AG04449 (cell line): ENCODE measurements at regions of chr11 and their contacts with region 1.

Region 1: DNA sequence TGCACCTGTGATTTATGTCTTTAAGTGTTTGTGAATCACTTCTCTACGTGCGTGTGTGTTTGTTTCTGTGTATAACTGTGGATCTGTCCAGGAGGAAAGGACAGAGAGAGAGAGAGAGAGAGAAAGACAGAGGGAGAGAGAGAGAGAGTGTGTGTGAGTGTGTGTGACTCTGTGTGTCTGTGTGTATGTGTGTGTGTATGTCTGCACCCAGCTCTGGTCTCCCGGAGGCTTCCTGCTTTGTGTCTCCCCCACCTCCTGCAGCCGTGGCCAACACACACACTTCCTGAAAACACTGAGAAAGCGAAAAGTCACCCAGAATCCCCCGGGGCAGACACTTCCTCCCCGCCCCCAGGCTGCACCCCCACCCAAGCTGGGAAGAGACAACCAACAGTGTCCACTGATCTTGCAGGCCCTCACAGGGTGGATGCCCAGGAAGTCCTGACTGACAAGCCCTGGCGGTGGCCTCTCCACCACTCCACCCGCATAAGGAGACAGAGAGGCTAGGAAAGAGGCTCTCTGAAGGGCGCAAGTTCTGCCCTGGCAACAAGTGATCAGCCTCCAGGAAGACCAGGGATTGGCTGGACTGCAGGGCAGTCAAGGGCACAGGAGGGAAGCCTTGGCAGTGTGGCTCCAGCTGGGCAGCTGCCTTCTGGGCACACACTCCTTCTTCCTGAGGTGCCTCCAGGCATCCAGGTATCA is 30.0 kb downstream of the ARAP1 start:
- DNase-seq: peak; percentile 84
- H3K4me3 ChIP-seq: peak overlapping the region; percentile 77
- CTCF ChIP-seq: no peak

Region 2: GRCh38 chr11:72703267-72704008 is 18.8 kb before region 1 on chr11:
- CTCF ChIA-PET with region 1: interaction called, 14 read pairs
- POLR2A ChIA-PET with region 1: interaction called, 3 read pairs
- DNase-seq: peak; percentile 50
- H3K4me3 ChIP-seq: peak overlapping the region; percentile 13; the same call in 1 of the 2 replicates
- CTCF ChIP-seq: no peak

Region 3: DNA sequence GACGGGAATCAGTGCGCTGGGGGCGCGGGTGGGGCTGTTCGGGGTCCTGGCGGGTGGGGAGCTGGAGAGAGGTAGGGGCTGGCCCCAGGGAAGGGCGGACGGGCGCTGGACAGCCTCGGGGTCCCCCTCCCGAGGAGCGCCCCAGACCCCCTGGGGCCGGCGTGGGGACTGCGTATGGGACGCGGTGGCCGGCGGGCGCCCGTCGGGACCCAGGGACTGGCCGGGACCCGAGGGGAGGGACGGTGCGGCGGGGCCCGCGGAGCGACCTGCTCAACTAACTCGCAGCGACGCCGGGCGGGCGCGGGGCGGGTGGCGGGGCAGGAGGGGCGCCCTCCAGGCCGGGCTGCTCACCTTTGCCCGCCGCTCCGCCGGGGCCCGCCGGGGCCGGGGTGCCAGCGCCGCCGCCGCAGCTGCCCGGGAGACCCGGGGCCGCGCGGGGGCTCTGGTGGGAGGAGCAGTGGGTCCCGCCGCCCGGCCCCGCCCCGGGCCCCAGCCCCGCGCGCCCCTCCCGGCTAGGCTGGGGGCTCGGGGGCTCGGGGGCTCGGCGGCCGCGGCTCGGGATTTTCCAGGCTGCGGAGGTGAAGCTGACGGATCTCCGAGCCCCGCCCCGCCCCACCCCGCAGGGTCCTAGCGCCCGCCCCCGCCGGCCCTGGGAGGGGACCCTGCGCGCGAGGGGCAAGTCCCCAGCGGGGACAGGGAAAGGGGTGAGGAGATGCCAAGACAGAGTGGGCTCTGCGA is 59.3 kb after region 1 on chr11:
- CTCF ChIA-PET with region 1: interaction called, 12 read pairs
- POLR2A ChIA-PET with region 1: no interaction called
- DNase-seq: no peak
- H3K4me3 ChIP-seq: peak overlapping the region; percentile 53
- CTCF ChIP-seq: no peak

Region 4: DNA sequence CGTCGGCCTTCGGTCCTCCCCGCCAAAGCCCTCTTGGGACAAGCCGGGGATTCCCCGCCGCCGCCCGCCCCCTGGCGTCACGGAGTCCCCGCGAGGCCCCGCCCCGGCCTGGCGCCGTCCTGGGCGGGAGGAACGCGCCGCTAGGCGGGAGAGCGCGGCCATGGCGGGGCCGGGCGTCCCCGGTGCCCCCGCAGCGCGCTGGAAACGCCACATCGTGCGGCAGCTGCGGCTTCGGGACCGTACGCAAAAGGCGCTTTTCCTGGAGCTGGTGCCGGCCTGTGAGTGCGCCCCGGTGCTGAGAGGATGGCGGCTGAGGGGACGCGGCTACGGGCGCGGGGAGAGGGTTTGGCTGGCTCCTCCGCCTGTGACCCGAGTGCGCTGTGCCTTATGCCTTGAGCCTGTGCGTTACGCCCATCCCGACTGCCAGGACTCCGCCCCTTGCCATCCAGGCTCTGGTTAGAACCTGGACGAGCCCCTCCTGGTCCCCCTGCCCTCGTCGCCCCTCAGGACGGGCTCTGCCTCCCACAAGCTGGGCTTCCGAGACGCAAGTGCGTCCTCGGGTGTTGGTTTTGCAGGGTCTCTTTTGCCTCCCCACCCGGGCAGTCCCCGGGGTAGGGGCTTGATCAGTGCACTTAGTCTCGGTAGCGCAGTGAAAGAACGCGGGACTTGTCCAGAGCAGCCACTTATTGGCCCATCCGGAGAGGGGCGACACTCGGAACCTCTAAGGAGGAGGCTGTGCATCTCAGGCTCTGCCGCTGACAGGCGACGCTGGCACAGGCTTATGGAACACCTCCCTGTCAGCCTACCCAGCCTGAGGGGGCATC is 92.3 kb after region 1 on chr11 and contains the start of gene ATG16L2:
- CTCF ChIA-PET with region 1: interaction called, 128 read pairs
- POLR2A ChIA-PET with region 1: interaction called, 5 read pairs
- DNase-seq: no peak
- H3K4me3 ChIP-seq: peak within 1 kb of the TSS; percentile 91
- CTCF ChIP-seq: peak; percentile 21

Region 5: GRCh38 chr11:72831513-72832300 is 109.5 kb after region 1 on chr11:
- CTCF ChIA-PET with region 1: interaction called, 60 read pairs
- POLR2A ChIA-PET with region 1: interaction called, 3 read pairs
- DNase-seq: no peak
- H3K4me3 ChIP-seq: no peak overlapping the region
- CTCF ChIP-seq: peak; percentile 97

Region 6: GRCh38 chr11:73288873-73289707 is 566.9 kb after region 1 on chr11:
- CTCF ChIA-PET with region 1: interaction called, 14 read pairs
- POLR2A ChIA-PET with region 1: no interaction called
- DNase-seq: no peak
- H3K4me3 ChIP-seq: no peak overlapping the region
- CTCF ChIP-seq: peak; percentile 97